Common myeloid progenitor, CD34-positive (primary cell): ENCODE measurements at regions of chr16 and their contacts with region 1.

Region 1: DNA sequence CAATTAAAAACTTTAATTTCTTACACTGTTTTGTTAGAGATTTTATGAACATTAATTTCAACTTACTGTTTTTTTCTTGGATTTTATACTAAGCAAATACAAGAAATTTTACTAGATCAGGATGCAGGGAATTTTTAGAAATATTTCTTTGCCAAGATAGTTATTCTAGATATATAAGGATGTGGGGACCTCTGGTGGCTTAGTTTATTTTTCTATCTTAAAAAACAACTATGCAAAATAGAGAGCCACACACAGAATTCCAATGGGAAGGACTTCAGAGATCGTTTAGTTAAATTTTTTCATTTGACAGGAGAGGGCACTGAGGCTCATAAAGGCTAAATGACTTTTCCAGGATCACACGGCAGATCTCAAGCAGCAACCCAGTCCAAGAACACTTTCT is 23.0 kb upstream of the CAPNS2 start:
- DNase-seq: peak in 2 of 3 donors; percentile 18 to 30
- H3K4me3 ChIP-seq: no peak overlapping the region
- H3K27ac ChIP-seq: no peak overlapping the region
- H3K4me1 ChIP-seq: peaks cover 0 to 12% (median 5%) of the 10 kb centered on the region in 4 experiments
- H3K27me3 ChIP-seq: no peaks in the 10 kb centered on the region

Region 2: GRCh38 chr16:55494994-55495421 is 48.5 kb before region 1 on chr16:
- CTCF ChIA-PET with region 1: interaction called, 20 read pairs
- POLR2A ChIA-PET with region 1: no interaction called
- DNase-seq: peak; percentile 65 to 78 (median 77)
- H3K4me3 ChIP-seq: no peak overlapping the region
- H3K27ac ChIP-seq: no peak overlapping the region
- H3K4me1 ChIP-seq: peaks cover 0 to 48% (median 32%) of the 10 kb centered on the region in 4 experiments
- H3K27me3 ChIP-seq: no peaks in the 10 kb centered on the region

Region 3: GRCh38 chr16:55502801-55503366 is 40.6 kb before region 1 on chr16:
- CTCF ChIA-PET with region 1: interaction called, 20 read pairs
- POLR2A ChIA-PET with region 1: no interaction called
- DNase-seq: no peak
- H3K4me3 ChIP-seq: no peak overlapping the region
- H3K27ac ChIP-seq: no peak overlapping the region
- H3K4me1 ChIP-seq: peaks cover 6 to 43% (median 27%) of the 10 kb centered on the region in 4 experiments
- H3K27me3 ChIP-seq: no peaks in the 10 kb centered on the region

Region 4: GRCh38 chr16:55585631-55586030 is 42.2 kb after region 1 on chr16:
- CTCF ChIA-PET with region 1: no interaction called
- POLR2A ChIA-PET with region 1: no interaction called
- DNase-seq: no peak
- H3K4me3 ChIP-seq: no peak overlapping the region
- H3K27ac ChIP-seq: no peak overlapping the region
- H3K4me1 ChIP-seq: no peaks in the 10 kb centered on the region
- H3K27me3 ChIP-seq: no peaks in the 10 kb centered on the region